MCF 10A (cell line): ENCODE measurements at regions of chr17 and their contacts with region 1.

Region 1: DNA sequence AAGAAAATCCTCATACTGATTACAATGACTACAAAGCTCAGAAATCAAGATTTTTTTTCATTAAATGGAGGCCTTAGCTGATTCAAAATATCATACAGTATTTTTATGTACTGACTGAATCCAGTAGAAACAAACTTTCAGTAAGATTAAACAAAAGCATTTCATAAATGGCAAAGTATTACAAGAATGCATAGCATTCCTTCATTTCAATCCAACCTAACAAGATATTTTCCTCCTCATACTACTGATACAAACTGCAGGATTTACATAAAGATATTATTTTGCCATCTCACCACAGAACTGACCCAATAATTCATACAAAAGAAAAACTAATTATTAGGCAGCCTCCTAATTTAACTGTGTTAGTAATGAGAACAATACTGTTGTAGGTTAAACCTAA is 6.2 kb upstream of the KANSL1 start:
- DNase-seq: no peak
- H3K4me3 Mint-ChIP-seq: no peak overlapping the region
- H3K27ac Mint-ChIP-seq: no peak overlapping the region
- H3K4me1 Mint-ChIP-seq: peaks cover 11% of the 10 kb centered on the region
- H3K27me3 Mint-ChIP-seq: no peaks in the 10 kb centered on the region
- CTCF ChIP-seq: no peak

Region 2: DNA sequence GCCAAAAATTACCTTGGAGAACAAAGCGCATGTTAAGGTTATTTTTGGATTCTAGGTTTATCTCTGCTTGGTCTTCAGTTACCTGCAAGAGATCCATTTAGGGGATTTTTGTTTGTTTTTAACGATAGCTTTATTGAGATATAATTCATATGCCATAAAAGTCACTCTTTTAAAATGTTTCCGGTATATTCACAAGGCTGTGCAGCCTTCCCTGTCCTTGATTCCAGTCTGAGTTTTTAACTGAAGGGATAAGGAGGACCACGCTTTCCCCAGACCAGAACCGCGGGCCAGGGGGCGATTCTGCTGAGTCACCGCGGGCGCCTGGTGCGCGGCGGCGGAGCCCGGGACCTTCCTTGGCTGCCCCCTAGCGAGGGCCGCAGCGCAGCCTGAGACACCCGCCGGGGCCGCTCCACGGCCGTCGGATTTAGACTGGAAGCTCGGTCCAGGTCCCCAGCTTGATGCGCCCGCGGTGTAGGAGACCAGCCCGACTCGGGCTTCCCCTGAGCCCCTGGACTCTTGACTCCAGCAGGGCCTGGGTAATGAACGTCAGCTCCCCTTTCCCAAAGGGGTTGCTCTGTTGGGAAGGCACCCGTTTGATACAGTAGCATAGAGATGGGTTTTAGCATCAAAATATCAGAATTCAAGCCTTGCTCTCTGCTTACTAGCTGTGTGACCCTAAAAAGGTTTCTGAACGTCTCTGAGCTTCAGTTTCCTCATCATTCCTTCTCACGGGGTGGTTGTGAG is 250.3 kb before region 1 on chr17:
- CTCF ChIA-PET with region 1: no interaction called
- POLR2A ChIA-PET with region 1: no interaction called
- intact Hi-C with region 1: no loop called
- DNase-seq: peak; percentile 66
- H3K4me3 Mint-ChIP-seq: peak overlapping the region; percentile 38
- H3K27ac Mint-ChIP-seq: no peak overlapping the region
- H3K4me1 Mint-ChIP-seq: no peaks in the 10 kb centered on the region
- H3K27me3 Mint-ChIP-seq: peaks cover 47% of the 10 kb centered on the region
- CTCF ChIP-seq: peak; percentile 75

Region 3: GRCh38 chr17:46035112-46035818 is 164.1 kb before region 1 on chr17:
- CTCF ChIA-PET with region 1: no interaction called
- POLR2A ChIA-PET with region 1: no interaction called
- intact Hi-C with region 1: no loop called
- DNase-seq: no peak
- H3K4me3 Mint-ChIP-seq: no peak overlapping the region
- H3K27ac Mint-ChIP-seq: no peak overlapping the region
- H3K4me1 Mint-ChIP-seq: no peaks in the 10 kb centered on the region
- H3K27me3 Mint-ChIP-seq: no peaks in the 10 kb centered on the region
- CTCF ChIP-seq: no peak

Region 4: GRCh38 chr17:46144246-46144645 is 55.1 kb before region 1 on chr17:
- CTCF ChIA-PET with region 1: no interaction called
- POLR2A ChIA-PET with region 1: no interaction called
- intact Hi-C with region 1: no loop called
- DNase-seq: no peak
- H3K4me3 Mint-ChIP-seq: no peak overlapping the region
- H3K27ac Mint-ChIP-seq: peak overlapping the region; percentile 23
- H3K4me1 Mint-ChIP-seq: peaks cover 33% of the 10 kb centered on the region
- H3K27me3 Mint-ChIP-seq: no peaks in the 10 kb centered on the region
- CTCF ChIP-seq: no peak

Region 5: DNA sequence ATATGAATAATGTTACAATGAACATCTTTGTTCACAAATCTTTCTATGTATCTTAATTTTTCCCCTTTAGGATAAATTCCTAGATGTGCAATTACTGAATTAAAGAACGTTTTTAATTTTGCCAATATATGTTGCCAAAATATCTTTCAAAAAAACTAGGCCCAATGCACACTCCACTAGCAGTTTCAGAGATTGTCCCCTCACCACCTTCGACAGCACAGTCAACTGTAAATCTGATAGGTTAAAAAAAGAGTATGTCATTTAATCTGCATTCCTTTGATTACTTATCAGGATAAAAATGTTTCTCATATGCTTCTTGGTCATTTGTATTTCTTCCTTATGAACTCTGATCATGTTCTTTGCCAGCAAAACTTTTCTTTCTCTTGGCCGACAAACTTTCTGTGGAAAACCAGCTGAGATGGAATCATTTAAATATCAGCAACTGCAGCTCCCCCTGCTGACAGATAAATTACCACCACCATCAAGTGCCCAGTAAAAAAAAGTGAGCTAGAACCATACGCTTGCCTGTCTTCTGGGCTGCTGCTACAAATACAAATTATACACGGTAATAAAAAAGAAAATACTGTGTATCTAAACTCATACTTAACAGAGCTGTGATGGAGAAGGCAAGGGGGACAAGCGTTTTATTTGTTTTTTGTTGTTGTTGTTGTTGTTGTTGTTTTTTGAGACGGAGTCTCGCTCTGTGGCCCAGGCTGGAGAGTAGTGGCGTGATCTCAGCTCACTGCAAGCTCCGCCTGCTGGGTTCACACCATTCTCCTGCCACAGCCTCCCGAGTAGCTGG is 13.5 kb after region 1 on chr17:
- CTCF ChIA-PET with region 1: interaction called, 22 read pairs
- POLR2A ChIA-PET with region 1: interaction called, 18 read pairs
- intact Hi-C with region 1: no loop called
- DNase-seq: peak; percentile 85
- H3K4me3 Mint-ChIP-seq: no peak overlapping the region
- H3K27ac Mint-ChIP-seq: no peak overlapping the region
- H3K4me1 Mint-ChIP-seq: peaks cover 12% of the 10 kb centered on the region
- H3K27me3 Mint-ChIP-seq: no peaks in the 10 kb centered on the region
- CTCF ChIP-seq: peak; percentile 75